ENCODE measurements at regions of chrX and their contacts with region 1.

Region 1: GRCh38 chrX:140057001-140057411 is 91.7 kb upstream of the CXorf66 start:
- DNase-seq: peak; percentile 15
- ATAC-seq: no peak
- H3K4me3 Mint-ChIP-seq: no peak overlapping the region
- H3K27ac Mint-ChIP-seq: no peak overlapping the region
- H3K4me1 Mint-ChIP-seq: no peaks in the 10 kb centered on the region
- H3K27me3 Mint-ChIP-seq: peaks cover 3% of the 10 kb centered on the region
- CTCF ChIP-seq: no peak

Region 2: DNA sequence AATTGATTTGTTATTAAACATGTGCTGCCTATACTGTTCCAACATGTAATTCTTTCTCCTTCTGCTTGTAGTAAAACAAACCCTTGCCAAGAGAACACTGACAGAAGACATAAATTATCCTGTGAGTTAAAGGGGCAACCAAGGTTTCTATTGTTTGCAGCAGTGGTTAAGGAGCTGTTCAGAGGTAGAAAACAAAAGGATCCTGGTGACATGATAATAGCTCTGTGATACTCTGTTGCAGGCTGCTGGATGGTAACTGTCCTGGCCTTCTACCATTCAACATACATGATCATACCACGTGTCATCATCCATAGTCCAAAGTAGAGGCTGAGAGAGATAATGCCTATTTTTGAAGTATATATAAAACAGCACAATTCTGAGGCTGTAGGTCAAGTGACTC is 602.2 kb before region 1 on chrX:
- CTCF ChIA-PET with region 1: no interaction called
- POLR2A ChIA-PET with region 1: no interaction called
- intact Hi-C with region 1: no loop called
- DNase-seq: no peak
- ATAC-seq: no peak
- H3K4me3 Mint-ChIP-seq: no peak overlapping the region
- H3K27ac Mint-ChIP-seq: no peak overlapping the region
- H3K4me1 Mint-ChIP-seq: no peaks in the 10 kb centered on the region
- H3K27me3 Mint-ChIP-seq: no peaks in the 10 kb centered on the region
- CTCF ChIP-seq: no peak

Region 3: GRCh38 chrX:139538907-139539790 is 517.9 kb before region 1 on chrX:
- CTCF ChIA-PET with region 1: no interaction called
- POLR2A ChIA-PET with region 1: no interaction called
- intact Hi-C with region 1: no loop called
- DNase-seq: no peak
- ATAC-seq: no peak
- H3K4me3 Mint-ChIP-seq: no peak overlapping the region
- H3K27ac Mint-ChIP-seq: no peak overlapping the region
- H3K4me1 Mint-ChIP-seq: no peaks in the 10 kb centered on the region
- H3K27me3 Mint-ChIP-seq: no peaks in the 10 kb centered on the region
- CTCF ChIP-seq: no peak

Region 4: GRCh38 chrX:140110081-140110650 is 53.2 kb after region 1 on chrX:
- CTCF ChIA-PET with region 1: no interaction called
- POLR2A ChIA-PET with region 1: no interaction called
- intact Hi-C with region 1: no loop called
- DNase-seq: no peak
- ATAC-seq: no peak
- H3K4me3 Mint-ChIP-seq: no peak overlapping the region
- H3K27ac Mint-ChIP-seq: no peak overlapping the region
- H3K4me1 Mint-ChIP-seq: no peaks in the 10 kb centered on the region
- H3K27me3 Mint-ChIP-seq: no peaks in the 10 kb centered on the region
- CTCF ChIP-seq: no peak

Region 5: DNA sequence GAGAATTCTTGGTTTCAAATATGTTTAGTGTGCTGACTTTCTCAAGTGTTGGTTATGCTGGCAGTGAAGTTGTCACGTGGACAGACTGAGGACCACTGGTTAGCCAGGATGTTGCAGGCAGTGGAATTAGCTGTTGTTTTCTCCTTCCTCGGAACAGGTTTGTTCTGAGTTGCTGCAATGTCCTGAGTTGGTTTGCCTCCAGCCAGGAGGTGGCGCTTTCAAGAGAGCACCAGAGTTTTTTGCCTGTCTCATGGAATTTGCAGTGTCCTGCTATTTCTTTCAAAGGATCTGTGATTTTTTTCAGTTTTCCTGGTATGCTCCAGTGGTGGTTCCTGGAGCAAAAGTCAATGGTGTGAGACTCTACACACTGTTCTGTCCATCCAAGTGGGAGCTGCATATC is 66.4 kb after region 1 on chrX:
- CTCF ChIA-PET with region 1: no interaction called
- POLR2A ChIA-PET with region 1: no interaction called
- intact Hi-C with region 1: no loop called
- DNase-seq: no peak
- ATAC-seq: no peak
- H3K4me3 Mint-ChIP-seq: no peak overlapping the region
- H3K27ac Mint-ChIP-seq: no peak overlapping the region
- H3K4me1 Mint-ChIP-seq: no peaks in the 10 kb centered on the region
- H3K27me3 Mint-ChIP-seq: no peaks in the 10 kb centered on the region
- CTCF ChIP-seq: no peak

Region 6: DNA sequence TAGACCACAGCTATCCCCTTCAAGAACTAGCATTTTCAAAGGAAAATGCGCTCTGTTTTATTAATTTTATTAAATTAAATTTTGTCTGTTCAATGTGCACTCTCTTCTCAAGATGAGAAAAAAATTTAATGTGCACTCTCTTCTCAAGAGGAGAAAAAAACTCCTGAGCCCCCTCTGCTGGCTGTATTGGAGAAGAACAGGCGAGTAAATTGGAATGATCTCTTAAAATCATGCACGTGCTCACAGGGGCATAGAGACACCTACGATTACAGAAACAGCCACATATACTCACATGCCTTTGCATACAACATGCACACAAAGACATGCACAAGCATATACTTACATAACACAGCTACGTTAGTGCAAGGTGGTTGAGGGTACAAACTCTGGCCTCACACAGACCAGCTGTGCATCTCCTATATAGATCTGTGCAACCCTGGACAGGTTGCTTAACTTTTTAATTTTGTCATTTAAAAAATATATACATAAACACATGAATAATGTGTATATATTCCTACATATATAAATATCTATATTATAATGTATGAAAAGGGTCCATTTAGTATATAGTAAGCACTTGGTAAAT is 84.5 kb after region 1 on chrX:
- CTCF ChIA-PET with region 1: interaction called, 6 read pairs
- POLR2A ChIA-PET with region 1: no interaction called
- intact Hi-C with region 1: loop called (anchors 1 kb)
- DNase-seq: no peak
- ATAC-seq: no peak
- H3K4me3 Mint-ChIP-seq: no peak overlapping the region
- H3K27ac Mint-ChIP-seq: no peak overlapping the region
- H3K4me1 Mint-ChIP-seq: no peaks in the 10 kb centered on the region
- H3K27me3 Mint-ChIP-seq: no peaks in the 10 kb centered on the region
- CTCF ChIP-seq: no peak